Left ventricle myocardium inferior (tissue), 1 donor: ENCODE measurements at regions of chr16 and their contacts with region 1.

Region 1: DNA sequence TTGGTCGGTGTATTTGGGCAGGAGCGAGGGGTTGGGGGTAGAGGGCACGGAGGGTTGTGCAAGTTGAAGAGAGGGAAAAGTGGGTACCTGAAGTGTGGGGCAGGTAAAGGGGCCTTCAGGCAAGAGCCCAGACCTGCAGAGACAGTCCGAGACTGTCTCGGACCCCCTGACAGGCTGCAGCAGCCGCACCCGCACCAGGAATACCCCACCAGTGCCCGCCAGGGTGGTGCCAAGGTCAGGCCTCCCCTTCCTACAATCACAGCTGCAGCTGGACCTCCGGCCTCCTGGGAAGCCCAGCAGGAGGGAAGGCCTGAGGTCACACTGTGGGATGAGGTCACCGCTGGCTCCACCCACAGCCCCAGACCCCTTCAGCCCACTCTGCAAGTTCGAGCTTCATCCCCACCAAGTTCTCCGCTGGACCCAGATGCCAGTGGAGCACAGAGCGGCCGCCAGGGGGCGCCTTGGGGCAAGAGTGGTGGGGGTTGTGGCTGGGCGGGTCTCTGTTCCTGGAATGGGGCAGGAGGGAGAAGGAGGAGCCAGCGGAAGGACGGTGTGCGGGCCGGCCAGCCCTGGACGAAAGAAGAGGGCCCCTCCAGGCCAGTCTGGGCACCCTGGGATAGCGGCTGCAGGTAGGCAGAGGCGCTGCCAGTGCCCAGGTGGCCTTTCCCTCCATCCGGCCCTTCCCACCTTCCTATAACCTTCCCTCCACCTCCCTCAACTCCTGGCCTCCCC is at the start of gene HSD3B7:
- DNase-seq: peak; percentile 88
- H3K4me3 ChIP-seq: peak within 1 kb of the TSS; percentile 72
- H3K27ac ChIP-seq: peak within 1 kb of the TSS; percentile 85
- H3K4me1 ChIP-seq: peaks cover 20% of the 10 kb centered on the region
- H3K27me3 ChIP-seq: no peaks in the 10 kb centered on the region
- CTCF ChIP-seq: peak; percentile 95
- total RNA-seq, gene HSD3B7: 5.5 TPM

Region 2: DNA sequence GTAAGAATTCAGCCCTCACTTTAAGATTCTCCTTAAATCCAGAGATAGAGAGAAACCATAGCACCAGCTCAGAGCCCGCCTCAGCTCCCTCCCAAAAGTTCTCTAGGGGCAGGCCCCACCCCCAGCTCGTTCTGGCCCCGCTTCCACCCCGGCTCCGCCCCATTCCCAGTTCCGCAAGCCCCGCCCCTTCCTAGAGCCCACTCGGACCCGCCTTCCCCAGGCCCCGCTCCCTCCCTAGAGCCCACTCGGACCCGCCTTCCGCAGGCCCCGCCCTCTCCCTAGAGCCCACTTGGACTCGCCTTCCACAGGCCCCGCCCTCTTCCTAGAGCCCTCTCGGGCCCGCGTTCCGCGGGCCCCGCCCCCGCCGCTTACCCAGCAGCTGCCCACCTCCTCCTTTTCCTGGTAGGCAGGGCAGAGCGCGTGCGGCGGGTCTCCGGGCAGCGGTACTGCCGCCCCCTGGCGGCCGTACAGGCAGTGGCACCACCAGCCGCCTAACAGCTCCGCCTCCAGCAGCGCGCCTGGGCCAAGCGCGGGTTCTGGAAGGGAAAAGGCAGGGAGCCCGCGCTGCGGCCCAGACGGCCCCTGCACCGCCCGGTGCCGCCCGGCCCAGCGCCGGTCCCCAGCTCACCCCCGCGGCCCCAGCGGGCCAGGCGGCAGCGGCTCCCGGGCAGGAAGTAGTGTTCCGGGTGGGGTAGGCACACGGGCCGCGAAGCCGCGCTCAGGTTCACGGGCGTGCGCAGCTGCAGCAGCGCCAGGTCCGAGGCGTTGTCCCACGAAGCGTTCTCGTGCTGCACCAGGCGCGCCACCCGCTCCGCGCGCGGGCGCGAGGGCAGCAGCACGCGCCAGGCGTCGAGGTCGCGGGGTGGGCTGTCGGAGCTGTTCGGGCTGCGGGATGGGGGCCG is 157.5 kb after region 1 on chr16:
- intact Hi-C with region 1: loop called (anchors 10 kb)
- DNase-seq: peak; percentile 99
- H3K4me3 ChIP-seq: peak overlapping the region; percentile 71
- H3K27ac ChIP-seq: peak overlapping the region; percentile 88
- H3K4me1 ChIP-seq: peaks cover 39% of the 10 kb centered on the region
- H3K27me3 ChIP-seq: peaks cover 8% of the 10 kb centered on the region
- CTCF ChIP-seq: peak; percentile 95

Region 3: DNA sequence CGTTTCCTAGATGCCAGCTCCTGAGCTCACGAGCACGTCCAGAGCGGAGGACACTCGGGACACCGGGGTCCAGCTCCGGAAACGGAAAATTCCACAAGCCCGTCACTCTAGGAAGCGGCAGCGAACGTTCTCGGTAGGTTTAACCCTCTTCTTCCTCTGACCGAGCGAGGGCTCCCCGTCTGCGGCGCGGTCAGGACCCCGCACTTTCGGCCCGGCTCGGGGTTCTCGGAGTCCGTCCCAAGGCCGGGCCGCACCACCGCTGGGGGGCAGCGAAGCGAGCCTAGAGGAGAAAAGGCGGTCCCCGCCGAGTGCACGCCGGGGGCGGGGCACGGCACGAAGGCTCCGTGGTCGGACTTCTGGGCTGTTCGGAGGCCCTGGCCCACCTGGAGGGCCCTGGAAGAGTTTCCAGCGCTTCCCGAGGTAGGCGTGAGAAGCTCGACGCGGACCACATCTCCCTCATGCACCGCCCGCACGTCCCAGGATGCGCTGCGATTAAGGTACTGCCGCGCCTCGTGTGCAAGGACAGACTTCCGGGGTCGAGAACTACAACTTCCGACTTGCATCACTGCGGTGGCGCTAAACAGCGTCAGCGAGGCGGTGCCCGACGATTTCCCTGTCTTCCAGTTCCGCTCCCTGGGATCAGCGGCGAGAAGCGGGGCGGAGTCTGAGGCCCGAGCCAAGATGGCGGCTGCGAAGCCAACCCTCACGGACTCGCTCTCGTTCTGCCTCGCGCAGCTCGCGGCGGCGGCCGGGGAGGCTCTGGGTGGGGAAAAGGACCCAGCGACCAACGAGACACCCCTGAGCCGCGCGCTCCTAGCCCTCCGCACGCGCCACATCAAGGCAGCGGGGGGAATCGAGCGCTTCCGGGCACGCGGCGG is 474.2 kb after region 1 on chr16 and contains the start of gene ARMC5:
- intact Hi-C with region 1: loop called (anchors 10 kb)
- DNase-seq: peak; percentile 97
- H3K4me3 ChIP-seq: peak within 1 kb of the TSS; percentile 83
- H3K27ac ChIP-seq: peak within 1 kb of the TSS; percentile 99
- H3K4me1 ChIP-seq: peaks cover 61% of the 10 kb centered on the region
- H3K27me3 ChIP-seq: no peaks in the 10 kb centered on the region
- CTCF ChIP-seq: peak; percentile 71
- total RNA-seq, gene ARMC5: 5.8 TPM